Activated T-helper 1 cell treated with anti-CD3 and anti-CD28 coated beads, Interleukin-12 subunit alpha, Interleukin-12 subunit beta, Interleukin-2, Interleukin-4 antibody, amounts not matched to agents 30 ng/mL and 10 ng/mL and 1 ng/mL, durations not matched to agents 14 hours and 24 hours and 36 hours (primary cell): ENCODE measurements at regions of chr19 and their contacts with region 1.

Region 1: GRCh38 chr19:18636183-18636968 is 452 bp upstream of the KLHL26 start:
- DNase-seq: peak; percentile 97
- H3K4me3 Mint-ChIP-seq: peak overlapping the region; percentile 80
- H3K27ac Mint-ChIP-seq: peak overlapping the region; percentile 61
- H3K4me1 Mint-ChIP-seq: peaks cover 22% of the 10 kb centered on the region
- H3K27me3 Mint-ChIP-seq: peaks cover 5% of the 10 kb centered on the region

Region 2: GRCh38 chr19:18192673-18193387 is 443.5 kb before region 1 on chr19 and contains the start of gene MPV17L2:
- intact Hi-C with region 1: loop called (anchors 1 kb)
- DNase-seq: peak; percentile 99
- H3K4me3 Mint-ChIP-seq: peak within 1 kb of the TSS; percentile 83
- H3K27ac Mint-ChIP-seq: peak within 1 kb of the TSS; percentile 90
- H3K4me1 Mint-ChIP-seq: peaks cover 20% of the 10 kb centered on the region
- H3K27me3 Mint-ChIP-seq: no peaks in the 10 kb centered on the region
- total RNA-seq, gene MPV17L2: 19.2 and 23.3 TPM in 2 replicates

Region 3: GRCh38 chr19:18571564-18572300 is 64.6 kb before region 1 on chr19 and contains the start of gene UBA52:
- intact Hi-C with region 1: loop called (anchors 5 kb)
- DNase-seq: peak; percentile 99
- H3K4me3 Mint-ChIP-seq: peak within 1 kb of the TSS; percentile 91
- H3K27ac Mint-ChIP-seq: peak within 1 kb of the TSS; percentile 98
- H3K4me1 Mint-ChIP-seq: peaks cover 27% of the 10 kb centered on the region
- H3K27me3 Mint-ChIP-seq: no peaks in the 10 kb centered on the region
- total RNA-seq, gene UBA52: 1,472 and 1,500 TPM in 2 replicates

Region 4: GRCh38 chr19:18785179-18786128 is 149.1 kb after region 1 on chr19:
- intact Hi-C with region 1: loop called (anchors 1 kb)
- DNase-seq: peak; percentile 41
- H3K4me3 Mint-ChIP-seq: no peak overlapping the region
- H3K27ac Mint-ChIP-seq: no peak overlapping the region
- H3K4me1 Mint-ChIP-seq: peaks cover 9% of the 10 kb centered on the region
- H3K27me3 Mint-ChIP-seq: peaks cover 34% of the 10 kb centered on the region

Region 5: GRCh38 chr19:18932216-18932841 is 296.0 kb after region 1 on chr19:
- intact Hi-C with region 1: loop called (anchors 1 kb)
- DNase-seq: peak; percentile 67
- H3K4me3 Mint-ChIP-seq: peak overlapping the region; percentile 73
- H3K27ac Mint-ChIP-seq: no peak overlapping the region
- H3K4me1 Mint-ChIP-seq: peaks cover 5% of the 10 kb centered on the region
- H3K27me3 Mint-ChIP-seq: peaks cover 8% of the 10 kb centered on the region

Region 6: DNA sequence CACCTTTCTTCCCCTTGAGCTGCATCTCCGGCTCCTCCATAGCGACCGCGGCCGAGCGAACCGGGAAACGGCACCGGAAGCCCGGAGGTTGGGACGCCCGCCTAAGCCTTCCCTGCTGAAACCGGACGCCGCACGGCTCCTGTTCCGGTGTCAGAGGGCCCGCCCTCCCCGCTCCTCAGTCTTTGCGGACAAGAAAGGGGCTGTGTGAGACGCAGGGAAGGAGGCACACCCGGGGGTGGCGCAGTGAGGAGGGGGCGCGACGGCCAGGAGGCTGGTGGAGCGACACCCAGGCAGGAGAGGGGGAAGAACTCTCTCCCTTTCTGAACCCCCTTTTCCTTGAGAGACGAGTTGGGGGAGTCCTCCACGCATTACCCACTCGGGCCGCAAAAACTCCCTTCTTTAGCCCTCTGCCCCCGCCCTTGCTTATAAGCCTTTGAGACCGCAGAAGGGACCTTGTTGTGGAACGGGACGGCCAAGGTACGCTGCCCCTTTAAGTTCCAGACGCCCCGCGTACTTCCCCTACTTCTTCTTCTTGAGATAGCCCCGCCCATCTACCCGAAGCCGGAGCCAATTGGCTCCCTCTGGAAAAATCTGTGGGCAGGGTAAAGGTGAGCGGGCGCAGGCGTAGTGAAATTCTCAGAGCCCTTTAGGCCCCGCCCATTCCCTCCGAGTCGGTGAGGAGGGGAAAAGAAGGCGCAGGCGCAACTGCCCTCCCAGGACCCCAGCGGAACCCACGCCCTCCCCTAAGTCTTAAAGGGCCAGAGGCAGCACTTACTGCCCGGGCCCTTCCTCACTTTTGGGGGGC is 555.9 kb after region 1 on chr19 and contains the starts of genes BORCS8 and RFXANK:
- intact Hi-C with region 1: loop called (anchors 5 kb)
- DNase-seq: peak; percentile 99
- H3K4me3 Mint-ChIP-seq: peak within 1 kb of the TSS; percentile 96
- H3K27ac Mint-ChIP-seq: peak within 1 kb of the TSS; percentile 99
- H3K4me1 Mint-ChIP-seq: peaks cover 20% of the 10 kb centered on the region
- H3K27me3 Mint-ChIP-seq: no peaks in the 10 kb centered on the region
- total RNA-seq, gene BORCS8: 37.8 and 38.6 TPM in 2 replicates
- total RNA-seq, gene RFXANK: 101 and 103 TPM in 2 replicates